Calu3 (cell line): ENCODE measurements at regions of chr2 and their contacts with region 1.

Region 1: GRCh38 chr2:142796161-142796560 is 81.3 kb upstream of the KYNU start:
- DNase-seq: no peak
- H3K4me3 Mint-ChIP-seq: no peak overlapping the region
- H3K27ac Mint-ChIP-seq: peak overlapping the region; percentile 37
- H3K4me1 Mint-ChIP-seq: peaks cover 21% of the 10 kb centered on the region
- H3K27me3 Mint-ChIP-seq: no peaks in the 10 kb centered on the region
- CTCF ChIP-seq: no peak

Region 2: DNA sequence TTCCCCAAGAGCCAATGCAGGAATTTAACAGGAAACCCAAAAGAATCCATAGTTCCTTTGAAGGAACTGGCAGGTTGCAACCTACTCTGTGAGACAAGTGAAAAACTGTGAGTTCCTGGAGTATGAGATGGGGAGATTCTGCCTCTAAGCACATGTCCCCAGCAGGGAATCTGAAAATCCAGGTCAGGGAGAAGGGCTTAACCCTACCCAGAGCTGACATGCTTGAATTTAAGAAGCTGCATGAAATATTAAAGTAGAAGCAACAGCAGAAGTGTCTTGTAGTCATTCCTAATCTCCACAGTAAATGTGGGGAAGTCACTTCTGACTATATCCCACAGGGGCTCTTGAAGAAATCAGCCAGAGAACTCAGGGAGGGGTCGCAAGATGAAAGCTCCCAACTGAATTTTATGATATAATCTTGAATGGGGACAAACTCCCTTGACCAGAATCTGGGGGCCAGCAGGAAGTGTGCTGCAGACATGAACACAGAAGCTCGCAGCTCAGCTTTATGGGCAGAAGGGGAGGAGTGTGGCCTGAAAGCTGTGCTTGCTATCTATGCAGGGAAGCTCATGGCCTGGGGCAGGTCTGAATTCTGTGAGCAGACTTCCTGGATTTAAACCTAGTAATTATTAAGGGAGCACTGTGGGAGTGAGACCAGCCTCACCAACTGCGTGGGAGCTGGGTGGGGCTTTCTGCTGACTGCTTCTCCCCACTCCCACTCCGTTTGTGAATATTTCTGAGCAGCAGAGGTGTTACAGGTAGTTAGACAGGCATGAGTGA is 102.8 kb before region 1 on chr2:
- CTCF ChIA-PET with region 1: no interaction called
- intact Hi-C with region 1: loop called (anchors 5 kb)
- DNase-seq: peak; percentile 15
- H3K4me3 Mint-ChIP-seq: no peak overlapping the region
- H3K27ac Mint-ChIP-seq: peak overlapping the region; percentile 64
- H3K4me1 Mint-ChIP-seq: peaks cover 47% of the 10 kb centered on the region
- H3K27me3 Mint-ChIP-seq: no peaks in the 10 kb centered on the region
- CTCF ChIP-seq: no peak

Region 3: DNA sequence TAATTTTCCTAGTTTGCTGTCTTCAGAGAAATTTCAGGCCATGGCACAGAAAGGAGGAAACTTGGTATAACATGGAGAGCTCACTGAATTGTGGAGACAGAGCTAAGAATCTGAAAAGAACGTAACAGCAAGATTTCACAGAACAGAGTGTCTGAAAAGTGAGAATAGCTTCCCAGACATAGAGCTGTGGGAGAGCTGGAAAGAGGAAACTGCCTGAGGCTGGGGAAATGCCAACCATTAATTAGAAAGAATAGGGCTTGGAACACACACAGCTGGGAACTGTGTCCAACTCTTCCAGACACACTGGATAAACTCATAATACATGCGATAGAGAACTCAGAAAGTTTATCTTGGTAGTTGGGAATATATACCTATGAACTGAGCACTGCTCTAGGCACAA is 29.7 kb after region 1 on chr2:
- CTCF ChIA-PET with region 1: no interaction called
- intact Hi-C with region 1: no loop called
- DNase-seq: no peak
- H3K4me3 Mint-ChIP-seq: no peak overlapping the region
- H3K27ac Mint-ChIP-seq: no peak overlapping the region
- H3K4me1 Mint-ChIP-seq: peaks cover 7% of the 10 kb centered on the region
- H3K27me3 Mint-ChIP-seq: no peaks in the 10 kb centered on the region
- CTCF ChIP-seq: no peak

Region 4: GRCh38 chr2:142980561-142981378 is 184.6 kb after region 1 on chr2:
- CTCF ChIA-PET with region 1: no interaction called
- intact Hi-C with region 1: loop called (anchors 1 kb)
- DNase-seq: no peak
- H3K4me3 Mint-ChIP-seq: peak overlapping the region; percentile 31
- H3K27ac Mint-ChIP-seq: peak overlapping the region; percentile 66
- H3K4me1 Mint-ChIP-seq: peaks cover 21% of the 10 kb centered on the region
- H3K27me3 Mint-ChIP-seq: no peaks in the 10 kb centered on the region
- CTCF ChIP-seq: peak; percentile 47